PC-3 (cell line): ENCODE measurements at regions of chr5 and their contacts with region 1.

Region 1: DNA sequence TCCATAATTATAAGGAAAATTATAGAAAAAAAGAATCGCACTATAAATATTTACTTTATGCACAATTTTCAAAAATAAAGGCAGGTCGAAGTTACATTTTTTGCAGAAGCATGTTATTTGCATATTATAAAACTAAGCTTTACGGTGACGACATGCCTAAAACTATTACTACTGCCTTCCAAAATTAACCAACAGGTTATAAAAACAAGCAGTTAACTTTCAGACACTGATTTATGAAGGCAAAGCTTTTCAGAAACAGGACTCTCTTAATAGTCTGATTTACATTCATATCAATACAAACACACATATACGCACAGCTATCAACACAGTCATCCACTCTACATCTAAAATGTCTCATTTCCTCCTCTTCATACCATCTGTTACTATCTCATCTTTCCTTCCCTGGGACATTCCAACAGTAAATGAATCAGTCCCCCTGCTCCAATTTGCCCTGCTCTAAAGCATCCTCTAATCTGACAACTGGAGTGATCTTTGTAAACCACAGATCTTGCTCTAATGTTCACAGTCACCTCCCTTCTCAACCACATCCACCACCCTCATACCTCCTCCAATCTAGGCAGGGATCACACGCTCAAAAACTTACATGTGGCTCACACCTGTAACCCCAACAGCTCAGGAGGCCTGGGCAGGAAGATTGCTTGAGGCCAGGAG is 21.6 kb downstream of the FBXW11 start:
- DNase-seq: peak; percentile 81
- ATAC-seq: peak; percentile 73
- H3K4me3 ChIP-seq: no peak overlapping the region
- H3K27ac ChIP-seq: peak overlapping the region; percentile 60
- H3K4me1 ChIP-seq: peaks cover 27% of the 10 kb centered on the region
- H3K27me3 ChIP-seq: no peaks in the 10 kb centered on the region
- CTCF ChIP-seq: no peak

Region 2: GRCh38 chr5:171418316-171418981 is 566.4 kb before region 1 on chr5:
- CTCF ChIA-PET with region 1: no interaction called
- POLR2A ChIA-PET with region 1: no interaction called
- intact Hi-C with region 1: no loop called
- DNase-seq: peak; percentile 88
- ATAC-seq: peak; percentile 76
- H3K4me3 ChIP-seq: peak overlapping the region; percentile 61
- H3K27ac ChIP-seq: no peak overlapping the region
- H3K4me1 ChIP-seq: peaks cover 15% of the 10 kb centered on the region
- H3K27me3 ChIP-seq: peaks cover 24% of the 10 kb centered on the region
- CTCF ChIP-seq: peak; percentile 98

Region 3: DNA sequence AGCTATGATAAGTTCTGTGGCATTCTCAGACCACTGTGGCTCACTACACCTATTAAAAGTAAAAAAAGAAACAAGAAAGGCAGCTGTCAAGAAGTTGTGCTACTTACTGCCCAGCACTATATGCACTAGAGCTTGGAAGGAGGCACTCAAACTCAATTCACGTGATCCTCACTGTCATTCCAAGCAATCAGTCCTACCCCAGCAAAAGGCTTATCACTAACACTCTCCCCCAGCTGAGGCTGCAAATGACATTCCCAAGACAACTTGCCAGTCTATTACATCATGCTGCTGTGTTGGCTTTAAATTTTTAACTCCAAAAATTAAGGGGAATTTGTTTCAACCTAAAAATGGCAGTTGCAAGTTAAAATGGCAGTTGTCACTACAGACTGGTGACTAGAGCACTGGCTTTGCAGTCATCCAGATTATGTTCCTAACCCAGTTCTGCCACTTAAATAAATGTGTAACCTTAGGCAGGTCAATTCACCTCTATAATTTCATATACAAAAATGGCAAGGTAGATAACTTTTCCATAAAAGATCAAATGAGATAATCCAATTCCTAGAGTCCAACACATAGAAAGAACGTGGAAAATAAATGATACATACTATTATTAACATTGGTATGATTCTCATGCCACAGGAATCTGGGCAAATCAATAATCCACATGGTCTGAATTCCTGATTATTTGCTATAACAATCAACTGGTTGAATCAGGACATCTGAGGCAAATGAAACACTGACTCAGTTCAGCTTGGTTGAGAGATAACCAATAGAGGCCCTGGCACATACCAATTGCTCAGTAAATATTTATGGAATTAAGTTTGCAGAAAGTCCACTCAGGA is 30.8 kb before region 1 on chr5:
- CTCF ChIA-PET with region 1: no interaction called
- POLR2A ChIA-PET with region 1: no interaction called
- intact Hi-C with region 1: no loop called
- DNase-seq: peak; percentile 87
- ATAC-seq: peak; percentile 63
- H3K4me3 ChIP-seq: peak overlapping the region; percentile 8; the same call in 1 of the 2 replicates
- H3K27ac ChIP-seq: peak overlapping the region; percentile 57
- H3K4me1 ChIP-seq: peaks cover 49% of the 10 kb centered on the region
- H3K27me3 ChIP-seq: no peaks in the 10 kb centered on the region
- CTCF ChIP-seq: no peak

Region 4: DNA sequence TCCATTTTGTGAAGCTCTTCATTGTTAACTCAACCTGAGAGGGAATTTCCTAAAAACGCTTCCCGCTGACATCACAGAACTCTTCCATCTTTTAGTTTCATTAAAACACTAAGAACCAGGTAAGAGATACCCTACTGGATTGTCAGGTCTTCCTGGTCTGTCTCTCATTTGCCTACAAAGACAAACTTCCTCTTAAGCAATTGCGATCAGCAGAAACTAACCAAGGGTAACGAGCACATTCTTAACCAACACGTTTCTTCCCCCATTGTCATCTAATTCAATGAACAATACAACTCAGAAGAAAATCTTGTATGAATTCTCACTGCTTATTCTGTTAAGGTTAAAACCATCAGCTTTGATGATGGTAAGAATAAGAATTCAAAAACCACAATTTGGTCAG is 15.0 kb after region 1 on chr5:
- CTCF ChIA-PET with region 1: no interaction called
- POLR2A ChIA-PET with region 1: no interaction called
- intact Hi-C with region 1: loop called (anchors 1 kb)
- DNase-seq: no peak
- ATAC-seq: no peak
- H3K4me3 ChIP-seq: no peak overlapping the region
- H3K27ac ChIP-seq: no peak overlapping the region
- H3K4me1 ChIP-seq: peaks cover 52% of the 10 kb centered on the region
- H3K27me3 ChIP-seq: no peaks in the 10 kb centered on the region
- CTCF ChIP-seq: no peak

Region 5: GRCh38 chr5:172031894-172032461 is 47.1 kb after region 1 on chr5:
- CTCF ChIA-PET with region 1: no interaction called
- POLR2A ChIA-PET with region 1: no interaction called
- intact Hi-C with region 1: no loop called
- DNase-seq: no peak
- ATAC-seq: no peak
- H3K4me3 ChIP-seq: no peak overlapping the region
- H3K27ac ChIP-seq: no peak overlapping the region
- H3K4me1 ChIP-seq: no peaks in the 10 kb centered on the region
- H3K27me3 ChIP-seq: no peaks in the 10 kb centered on the region
- CTCF ChIP-seq: no peak

Region 6: DNA sequence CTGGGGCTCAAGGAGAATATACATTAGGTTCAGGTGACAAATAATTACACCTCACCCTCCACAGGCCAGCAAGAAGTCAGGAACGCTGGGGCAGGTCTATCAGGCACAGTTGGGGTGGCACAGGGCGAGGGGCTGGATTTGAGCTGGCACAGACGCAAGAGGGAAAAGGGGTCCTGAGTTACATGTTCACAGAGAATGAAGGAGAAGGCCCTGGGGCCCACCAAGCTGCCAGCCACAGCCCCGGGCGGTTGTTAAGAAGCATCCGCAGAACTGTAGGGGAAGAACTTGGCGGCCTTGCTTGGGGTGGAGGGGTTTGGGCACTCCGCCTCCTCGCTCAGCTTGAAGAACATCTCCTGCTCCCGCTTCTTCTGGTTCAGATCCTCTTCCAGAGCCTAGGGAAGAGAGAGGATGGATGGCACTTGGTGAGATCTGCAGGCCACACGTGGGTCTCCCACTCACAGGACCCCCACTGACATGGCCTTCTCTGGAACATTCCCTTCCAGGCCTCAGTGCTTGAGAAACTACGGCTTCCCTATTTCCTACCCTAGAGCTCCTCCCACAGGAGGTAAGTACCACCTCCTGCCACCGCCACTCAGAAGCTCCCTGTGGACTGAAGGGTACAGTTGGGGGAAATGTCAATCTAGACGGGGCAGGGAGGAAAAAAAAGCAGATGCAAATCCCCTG is 59.9 kb after region 1 on chr5:
- CTCF ChIA-PET with region 1: no interaction called
- POLR2A ChIA-PET with region 1: no interaction called
- intact Hi-C with region 1: no loop called
- DNase-seq: no peak
- ATAC-seq: no peak
- H3K4me3 ChIP-seq: no peak overlapping the region
- H3K27ac ChIP-seq: no peak overlapping the region
- H3K4me1 ChIP-seq: no peaks in the 10 kb centered on the region
- H3K27me3 ChIP-seq: no peaks in the 10 kb centered on the region
- CTCF ChIP-seq: 0 out of 2 replicates have a peak, but pooled peaks have one; percentile 8